Dendritic cell treated with granulocyte-macrophage colony-stimulating factor and Interleukin-4, amounts not matched to agents 40 ng/mL and 50 ng/mL, for 4 days (primary cell): ENCODE measurements at regions of chr6 and their contacts with region 1.

Region 1: GRCh38 chr6:119442776-119443184 is 93.2 kb upstream of the MAN1A1 start:
- H3K4me3 Mint-ChIP-seq: no peak overlapping the region
- H3K27ac Mint-ChIP-seq: peak overlapping the region; percentile 36
- H3K4me1 Mint-ChIP-seq: peaks cover 48% of the 10 kb centered on the region
- H3K27me3 Mint-ChIP-seq: peaks cover 9% of the 10 kb centered on the region

Region 2: DNA sequence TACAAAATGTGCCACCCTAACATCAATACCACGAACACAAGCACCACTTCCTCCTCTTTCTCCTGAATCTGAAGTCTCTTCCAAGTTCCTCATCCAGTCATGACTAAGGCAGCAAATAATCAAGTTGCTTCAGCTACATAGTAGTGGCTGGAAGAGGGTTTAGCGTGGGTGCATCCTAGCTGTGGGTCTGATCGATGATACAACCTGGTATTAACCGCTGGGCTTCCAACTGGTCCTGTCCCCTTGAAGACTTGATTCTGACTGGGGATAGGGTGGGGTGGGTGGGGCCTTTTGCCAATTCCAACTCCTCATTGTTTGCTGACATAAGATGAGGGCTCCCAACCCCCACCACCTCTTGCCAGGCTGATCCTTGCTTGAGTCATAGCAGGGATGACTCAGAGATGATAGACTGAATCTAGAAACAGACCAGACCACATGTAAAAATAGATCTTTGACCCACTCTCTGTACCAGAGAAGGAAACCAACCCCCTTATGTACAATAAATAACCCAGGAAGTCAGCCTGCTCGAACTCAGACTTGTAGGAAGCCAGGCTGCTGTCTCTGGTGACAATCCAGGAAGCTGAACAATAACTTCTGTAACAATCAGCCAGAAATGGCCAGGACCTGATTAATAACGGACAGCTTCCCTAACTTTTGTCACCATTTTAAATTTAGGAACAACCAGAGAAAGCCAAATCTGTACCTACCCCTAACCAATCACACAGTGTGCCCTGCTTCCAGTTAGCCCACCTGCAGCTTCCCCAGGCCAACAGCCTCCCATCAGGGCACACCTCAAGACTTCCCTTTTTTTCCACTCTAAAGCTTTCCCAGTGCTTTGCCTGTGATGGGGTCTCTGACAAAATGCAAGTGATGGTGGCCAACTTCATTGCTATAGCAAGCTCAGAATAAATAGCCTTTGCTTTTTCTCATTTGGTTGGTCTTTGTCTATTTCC is 295.4 kb before region 1 on chr6:
- intact Hi-C with region 1: loop called (anchors 10 kb)
- H3K4me3 Mint-ChIP-seq: peak overlapping the region; percentile 17
- H3K27ac Mint-ChIP-seq: peak overlapping the region; percentile 82
- H3K4me1 Mint-ChIP-seq: peaks cover 38% of the 10 kb centered on the region
- H3K27me3 Mint-ChIP-seq: no peaks in the 10 kb centered on the region

Region 3: DNA sequence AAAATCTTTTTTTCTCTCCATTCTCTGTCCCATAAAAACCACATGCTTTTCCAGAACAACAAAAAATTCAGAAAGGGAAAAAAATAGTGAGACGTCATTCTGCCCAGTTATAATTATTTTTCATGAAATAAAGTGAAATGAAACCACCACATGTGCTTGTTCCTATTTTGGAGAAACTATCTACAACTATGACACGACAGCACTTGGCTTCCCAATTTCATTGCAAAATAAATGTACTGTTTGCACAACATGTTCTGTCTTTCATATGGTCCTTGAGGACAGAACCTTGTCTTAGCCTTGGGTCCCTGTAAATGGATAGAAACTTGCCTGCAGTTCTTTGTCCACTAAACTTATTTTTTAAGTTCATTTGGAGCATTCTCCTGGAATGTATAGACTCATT is 87.6 kb before region 1 on chr6:
- intact Hi-C with region 1: loop called (anchors 5 kb)
- H3K4me3 Mint-ChIP-seq: peak overlapping the region; percentile 18
- H3K27ac Mint-ChIP-seq: peak overlapping the region; percentile 77
- H3K4me1 Mint-ChIP-seq: peaks cover 36% of the 10 kb centered on the region
- H3K27me3 Mint-ChIP-seq: no peaks in the 10 kb centered on the region

Region 4: GRCh38 chr6:119552021-119552420 is 109.2 kb after region 1 on chr6:
- intact Hi-C with region 1: loop called (anchors 10 kb)
- H3K4me3 Mint-ChIP-seq: no peak overlapping the region
- H3K27ac Mint-ChIP-seq: peak overlapping the region; percentile 36
- H3K4me1 Mint-ChIP-seq: peaks cover 25% of the 10 kb centered on the region
- H3K27me3 Mint-ChIP-seq: no peaks in the 10 kb centered on the region

Region 5: GRCh38 chr6:119669221-119669620 is 226.4 kb after region 1 on chr6:
- intact Hi-C with region 1: loop called (anchors 5 kb)
- H3K4me3 Mint-ChIP-seq: no peak overlapping the region
- H3K27ac Mint-ChIP-seq: no peak overlapping the region
- H3K4me1 Mint-ChIP-seq: peaks cover 6% of the 10 kb centered on the region
- H3K27me3 Mint-ChIP-seq: peaks cover 4% of the 10 kb centered on the region